H1 (cell line): ENCODE measurements at regions of chr21 and their contacts with region 1.

Region 1: DNA sequence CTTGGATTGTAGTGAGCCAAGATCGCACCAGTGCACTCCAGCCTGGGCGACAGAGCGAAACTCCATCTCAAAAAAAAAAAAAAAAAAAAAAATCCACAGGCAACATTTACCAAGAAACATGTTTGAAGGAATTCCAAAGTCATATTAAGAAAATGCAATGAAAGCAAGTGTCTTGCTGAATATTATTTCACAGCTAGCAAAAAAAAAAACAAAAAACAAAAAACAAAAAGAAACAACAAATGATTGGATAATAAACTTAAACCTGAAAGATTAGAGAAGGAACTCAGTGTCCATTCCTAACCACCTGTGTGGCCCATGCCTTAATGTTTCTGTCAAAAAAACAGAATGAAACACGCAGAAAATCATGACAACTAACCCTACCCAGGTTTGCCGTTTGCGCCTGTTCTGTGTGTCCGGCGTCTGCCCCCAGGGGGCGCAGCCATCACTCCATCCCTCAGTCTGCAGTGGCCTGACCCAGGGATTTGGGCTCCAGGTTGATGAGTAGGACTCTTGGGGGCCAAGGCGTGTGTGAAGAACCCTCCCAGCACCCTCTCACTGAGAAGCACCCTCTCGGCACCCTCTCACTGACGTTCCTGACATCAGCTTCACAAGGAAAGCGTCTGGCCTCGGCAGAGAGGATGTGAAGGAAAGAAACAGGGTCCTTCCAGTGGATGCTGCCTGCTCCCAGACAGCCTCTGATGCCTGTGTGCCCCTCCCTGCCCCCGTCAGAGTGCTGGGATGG is 19.2 kb upstream of the PTTG1IP start:
- DNase-seq: peak in 1 of 2 experiments; percentile 93
- H3K4me3 ChIP-seq: no peak overlapping the region
- H3K27ac ChIP-seq: no peak overlapping the region
- H3K4me1 ChIP-seq: 0 out of 7 replicates have a peak, but pooled peaks cover 0 to 4% (median 0%) of the 10 kb centered on the region in 4 experiments
- H3K27me3 ChIP-seq: no peaks in the 10 kb centered on the region; a peak in 1 of 7 replicates
- CTCF ChIP-seq: peak in 2 of 3 experiments; percentile 82 to 94; a peak in 3 of 4 replicates
- EP300 ChIP-seq: no peak
- POLR2A ChIP-seq: no peak
- RAD21 ChIP-seq: peak; percentile 63 to 72

Region 2: GRCh38 chr21:44880762-44881585 is 11.7 kb before region 1 on chr21:
- CTCF ChIA-PET with region 1: interaction called, 43 read pairs
- POLR2A ChIA-PET with region 1: no interaction called
- DNase-seq: no peak
- H3K4me3 ChIP-seq: no peak overlapping the region
- H3K27ac ChIP-seq: no peak overlapping the region
- H3K4me1 ChIP-seq: no peaks in the 10 kb centered on the region
- H3K27me3 ChIP-seq: peaks cover 0 to 3% (median 1%) of the 10 kb centered on the region in 4 experiments; a peak in 2 of 7 replicates
- CTCF ChIP-seq: no peak
- EP300 ChIP-seq: no peak
- POLR2A ChIP-seq: no peak
- RAD21 ChIP-seq: no peak

Region 3: DNA sequence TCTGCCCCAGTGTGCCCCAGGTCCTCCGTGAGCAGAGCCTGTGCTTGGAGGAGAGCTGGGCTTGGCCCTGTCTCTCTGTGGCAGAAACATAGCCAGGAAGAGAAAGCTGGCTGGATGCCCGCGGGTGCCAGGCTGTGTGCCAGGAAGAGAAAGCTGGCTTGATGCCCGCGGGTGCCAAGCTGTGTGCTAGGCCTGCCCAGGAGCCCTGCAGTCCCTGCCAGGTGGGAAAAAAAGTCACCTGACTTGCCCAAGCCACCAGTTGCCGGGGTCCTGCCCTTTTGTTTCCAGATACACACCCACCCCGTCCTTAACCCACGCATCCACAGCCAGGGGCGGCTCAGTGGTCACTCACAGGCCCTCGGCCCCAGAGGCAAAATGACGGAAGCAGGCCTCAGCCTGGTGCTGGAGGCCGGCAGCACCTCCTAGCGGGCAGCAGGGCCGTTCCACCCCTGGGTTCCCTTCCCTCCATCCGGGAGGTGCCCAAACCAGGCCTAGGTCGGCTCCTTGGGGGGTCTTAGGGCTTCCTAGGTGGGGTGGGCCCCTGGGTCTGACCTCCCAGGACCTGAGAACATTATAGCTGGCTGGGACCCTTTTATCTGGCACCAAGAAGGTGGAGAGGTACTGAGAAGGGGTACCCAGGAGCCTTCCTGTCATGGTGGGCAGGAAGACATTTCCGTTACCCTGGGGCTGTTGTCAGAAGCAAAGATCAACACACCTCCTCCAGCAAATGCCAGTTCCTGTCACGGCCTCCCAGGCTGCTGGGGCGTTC is 18.9 kb after region 1 on chr21:
- CTCF ChIA-PET with region 1: interaction called, 28 read pairs
- POLR2A ChIA-PET with region 1: interaction called, 3 read pairs
- DNase-seq: no peak
- H3K4me3 ChIP-seq: no peak overlapping the region
- H3K27ac ChIP-seq: no peak overlapping the region
- H3K4me1 ChIP-seq: peaks cover 0 to 11% (median 0%) of the 10 kb centered on the region in 4 experiments; a peak in 3 of 7 replicates
- H3K27me3 ChIP-seq: peaks cover 0 to 2% (median 1%) of the 10 kb centered on the region in 4 experiments; a peak in 2 of 7 replicates
- CTCF ChIP-seq: peak in 2 of 3 experiments; percentile 30 to 45; a peak in 3 of 4 replicates
- EP300 ChIP-seq: no peak
- POLR2A ChIP-seq: no peak
- RAD21 ChIP-seq: peak; percentile 51 to 60

Region 4: DNA sequence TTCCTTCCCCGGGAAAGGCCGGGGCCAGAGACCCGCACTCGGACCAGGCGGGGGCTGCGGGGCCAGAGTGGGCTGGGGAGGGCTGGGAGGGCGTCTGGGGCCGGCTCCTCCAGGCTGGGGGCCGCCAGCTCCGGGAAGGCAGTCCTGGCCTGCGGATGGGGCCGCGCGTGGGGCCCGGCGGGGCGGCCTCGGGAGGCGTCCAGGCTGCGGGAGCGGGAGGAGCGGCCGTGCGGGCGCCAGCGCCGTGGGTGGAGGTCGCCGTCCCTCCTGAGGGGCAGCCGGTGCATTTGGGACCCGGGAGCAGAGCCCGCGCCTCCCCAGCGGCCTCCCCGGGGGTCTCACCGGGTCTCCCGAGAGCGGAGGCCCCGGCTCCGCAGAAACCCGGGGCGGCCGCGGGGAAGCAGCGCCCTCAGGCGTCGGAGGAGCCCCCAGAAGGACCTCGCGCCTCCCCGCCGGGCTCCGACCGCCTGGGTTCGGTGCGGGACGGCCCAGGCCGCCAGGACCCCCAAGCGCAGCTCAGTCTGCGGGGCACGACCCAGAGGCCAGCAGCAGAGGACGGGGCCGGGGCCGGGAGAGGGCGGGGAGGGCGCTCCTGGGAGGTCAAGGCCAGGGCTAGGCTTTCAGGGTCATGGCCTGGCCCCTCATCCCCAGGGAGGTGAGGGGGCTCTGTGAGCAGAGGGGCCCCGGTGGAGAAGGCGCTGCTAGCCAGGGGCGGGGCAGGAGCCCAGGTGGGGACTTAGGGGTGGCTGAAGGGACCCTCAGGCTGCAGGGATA is 39.9 kb after region 1 on chr21:
- CTCF ChIA-PET with region 1: interaction called, 11 read pairs
- POLR2A ChIA-PET with region 1: interaction called, 3 read pairs
- DNase-seq: no peak
- H3K4me3 ChIP-seq: peak overlapping the region in 1 of 4 experiments; percentile 58; a peak in 3 of 8 replicates
- H3K27ac ChIP-seq: no peak overlapping the region
- H3K4me1 ChIP-seq: peaks cover 0 to 25% (median 16%) of the 10 kb centered on the region in 4 experiments; a peak in 5 of 7 replicates
- H3K27me3 ChIP-seq: peaks cover 25 to 72% (median 60%) of the 10 kb centered on the region in 4 experiments
- CTCF ChIP-seq: peak in 2 of 3 experiments; percentile 7 to 32; a peak in 3 of 4 replicates
- EP300 ChIP-seq: no peak
- POLR2A ChIP-seq: no peak
- RAD21 ChIP-seq: peak; percentile 43 to 64; a peak in 3 of 4 replicates